Left cardiac atrium (tissue), 4 donors: ENCODE measurements at regions of chr3 and their contacts with region 1.

Region 1: GRCh38 chr3:168040607-168041208 is 55.0 kb downstream of the GOLIM4 start:
- DNase-seq: no peak
- ATAC-seq: peak; percentile 62 to 74

Region 2: GRCh38 chr3:167837466-167837865 is 203.2 kb before region 1 on chr3:
- intact Hi-C with region 1: loop called in 1 of 2 experiments (anchors 5 kb)
- DNase-seq: no peak
- ATAC-seq: no peak

Region 3: GRCh38 chr3:167929968-167930367 is 110.7 kb before region 1 on chr3:
- intact Hi-C with region 1: loop called (anchors 5 kb)
- DNase-seq: no peak
- ATAC-seq: peak; percentile 55 to 56

Region 4: GRCh38 chr3:167992381-167992780 is 48.3 kb before region 1 on chr3:
- intact Hi-C with region 1: no loop called
- DNase-seq: no peak
- ATAC-seq: no peak